Heart left ventricle (tissue), 16 donors: ENCODE measurements at regions of chr20 and their contacts with region 1.

Region 1: DNA sequence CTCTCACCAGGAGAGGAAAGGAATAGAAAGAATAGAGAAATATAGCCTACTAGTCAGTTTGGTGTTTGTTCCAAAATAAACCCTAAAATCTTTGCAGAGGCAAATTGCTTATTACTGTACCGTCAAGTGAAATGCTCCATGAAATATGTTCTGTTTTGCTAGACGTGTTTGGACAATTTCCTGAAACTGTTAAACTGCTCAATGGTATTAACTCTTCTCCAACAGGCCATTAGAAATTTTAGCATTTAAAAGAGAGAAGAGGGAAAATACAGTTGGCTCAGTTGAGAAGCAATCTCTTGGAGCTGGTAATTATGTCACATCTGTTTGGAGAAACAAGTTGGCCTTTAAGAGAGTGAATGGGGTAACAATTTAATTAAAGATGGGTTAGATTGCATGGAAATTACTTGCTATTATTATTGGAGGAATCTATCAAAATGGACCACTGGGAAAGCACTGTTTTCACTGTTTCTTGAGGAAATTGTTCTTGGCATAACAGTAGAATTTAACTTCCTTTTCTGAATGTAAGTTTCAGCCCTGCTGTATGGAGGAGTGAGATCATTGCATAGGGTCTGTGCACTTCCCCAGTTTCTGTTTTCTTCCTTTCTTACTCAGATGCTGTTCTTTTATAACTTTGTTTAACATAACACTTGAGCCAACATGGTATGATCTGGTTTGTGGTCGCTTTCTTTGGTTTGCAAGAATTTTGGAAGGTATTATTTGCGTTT is 373.6 kb downstream of the PLCB1 start:
- DNase-seq: no peak
- ATAC-seq: no peak
- H3K4me3 ChIP-seq: no peak overlapping the region
- H3K27ac ChIP-seq: peak overlapping the region in 1 of 12 donors; percentile 34
- H3K4me1 ChIP-seq: peaks cover 0 to 9% (median 0%) of the 10 kb centered on the region in 12 donors
- H3K27me3 ChIP-seq: no peaks in the 10 kb centered on the region
- CTCF ChIP-seq: no peak
- POLR2A ChIP-seq: no peak

Region 2: GRCh38 chr20:8175741-8176675 is 329.6 kb before region 1 on chr20:
- intact Hi-C with region 1: no loop called
- DNase-seq: no peak
- ATAC-seq: no peak
- H3K4me3 ChIP-seq: no peak overlapping the region
- H3K27ac ChIP-seq: no peak overlapping the region
- H3K4me1 ChIP-seq: peaks cover 0 to 12% (median 0%) of the 10 kb centered on the region in 12 donors
- H3K27me3 ChIP-seq: no peaks in the 10 kb centered on the region
- CTCF ChIP-seq: no peak
- POLR2A ChIP-seq: no peak

Region 3: DNA sequence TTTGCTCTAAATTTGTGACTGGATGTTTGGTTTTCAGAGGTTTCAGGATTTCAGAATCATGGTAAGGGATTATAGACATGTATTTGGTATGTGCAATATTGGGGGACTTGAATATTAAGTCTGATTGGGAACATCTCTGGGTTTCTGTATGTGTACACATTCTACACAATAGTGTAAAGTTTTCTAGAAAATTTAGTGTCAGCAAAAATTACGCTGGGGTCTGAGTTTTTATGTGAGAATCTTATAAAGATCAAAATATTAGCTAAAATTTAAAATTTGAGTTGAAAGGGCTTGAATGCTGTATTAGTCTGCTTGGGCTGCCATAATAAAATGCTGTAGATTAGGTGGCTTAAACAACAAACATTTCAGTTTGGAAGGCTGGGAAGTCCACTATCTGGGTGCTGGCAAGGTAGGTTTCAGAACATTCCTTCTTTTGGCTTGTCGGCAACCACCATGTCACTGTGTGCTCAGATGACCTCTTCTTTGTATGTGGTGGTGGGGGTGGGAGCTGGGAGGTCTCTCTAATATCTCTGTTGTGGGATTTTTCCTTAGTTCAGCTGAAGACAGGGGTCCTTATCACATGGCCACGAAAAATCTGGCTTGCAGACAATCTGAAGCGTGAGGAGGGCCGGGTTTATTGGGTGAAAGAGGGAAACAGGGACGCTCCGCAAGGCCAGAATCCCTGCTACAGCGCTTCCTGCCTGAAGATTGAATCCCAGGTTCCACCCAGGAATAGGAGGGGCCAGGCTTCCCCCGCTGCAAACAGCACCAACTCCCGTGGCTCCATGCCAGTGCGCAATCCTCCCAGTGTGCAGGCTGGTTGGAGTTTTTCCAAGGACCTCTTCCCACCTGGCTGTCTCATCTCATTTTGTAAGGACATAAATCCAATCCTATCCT is 73.9 kb before region 1 on chr20:
- intact Hi-C with region 1: loop called in 1 of 10 experiments (anchors 10 kb)
- DNase-seq: peak; percentile 77 to 84 (median 81)
- ATAC-seq: peak; percentile 62 to 90 (median 82)
- H3K4me3 ChIP-seq: peak overlapping the region in 7 of 12 donors; percentile 8 to 31 (median 15)
- H3K27ac ChIP-seq: peak overlapping the region in 11 of 12 donors; percentile 38 to 79 (median 65)
- H3K4me1 ChIP-seq: peaks cover 3 to 79% (median 25%) of the 10 kb centered on the region in 12 donors
- H3K27me3 ChIP-seq: no peaks in the 10 kb centered on the region
- CTCF ChIP-seq: no peak
- POLR2A ChIP-seq: no peak